Activated CD8-positive, alpha-beta T cell treated with anti-CD3 and anti-CD28 coated beads, Interleukin-2, amount 10 ng/mL, durations not matched to agents 7 days and 5 days (primary cell): ENCODE measurements at regions of chr22 and their contacts with region 1.

Region 1: DNA sequence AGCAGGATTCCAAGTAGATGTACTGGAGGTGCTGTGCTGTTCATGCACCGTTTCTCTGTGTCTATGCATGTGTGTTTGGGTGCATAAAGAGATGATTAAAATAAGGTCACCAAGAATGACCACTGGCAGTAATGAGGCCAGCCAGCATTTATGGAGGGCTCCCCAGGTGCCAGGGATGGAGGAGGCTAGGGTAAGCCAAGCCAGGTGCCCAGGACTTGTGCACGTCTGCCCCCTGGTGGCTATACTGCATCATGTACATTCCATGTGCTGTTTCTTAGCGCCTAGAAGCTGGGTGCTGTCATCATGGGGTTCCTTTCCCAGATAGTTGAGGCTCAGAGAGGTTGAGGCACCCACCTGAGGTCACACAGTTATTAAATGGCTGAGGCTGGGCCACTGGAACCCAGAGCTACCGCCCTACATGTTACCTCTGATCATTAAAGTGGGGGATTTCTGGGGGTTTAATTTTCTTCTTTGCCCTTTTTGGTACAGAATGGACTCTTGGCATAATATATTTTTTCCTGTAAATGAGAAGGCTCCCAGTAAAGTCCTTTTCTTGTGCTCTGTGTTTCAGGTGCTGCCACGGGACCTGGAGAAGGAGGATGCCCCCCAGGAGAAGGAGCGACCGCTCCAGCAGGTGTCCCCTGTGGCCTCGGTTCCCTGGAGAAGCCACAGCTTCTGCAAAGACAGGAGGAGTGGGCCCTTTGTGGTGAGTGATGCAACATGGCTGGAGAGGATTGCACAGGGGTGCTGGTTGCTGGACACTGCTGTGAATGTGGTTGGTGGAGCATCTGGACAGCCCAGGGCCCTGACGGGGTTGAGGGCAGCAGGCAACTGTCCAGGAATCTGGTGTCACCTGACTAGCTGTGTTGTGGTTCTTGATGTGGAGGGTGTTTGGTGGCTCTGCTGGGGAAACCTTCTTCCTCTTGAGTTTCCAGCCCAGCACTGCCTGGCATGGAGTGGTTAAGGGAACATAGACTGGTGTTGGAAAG is 96.4 kb downstream of the KIAA1671 start:
- DNase-seq: peak; percentile 83
- ATAC-seq: peak; percentile 98
- H3K4me3 Mint-ChIP-seq: no peak overlapping the region
- H3K27ac Mint-ChIP-seq: no peak overlapping the region
- H3K4me1 Mint-ChIP-seq: no peaks in the 10 kb centered on the region
- H3K27me3 Mint-ChIP-seq: no peaks in the 10 kb centered on the region

Region 2: GRCh38 chr22:24768537-24769374 is 280.2 kb before region 1 on chr22:
- CTCF ChIA-PET with region 1: interaction called, 11 read pairs
- POLR2A ChIA-PET with region 1: no interaction called
- DNase-seq: peak; percentile 57
- ATAC-seq: peak; percentile 64
- H3K4me3 Mint-ChIP-seq: no peak overlapping the region
- H3K27ac Mint-ChIP-seq: no peak overlapping the region
- H3K4me1 Mint-ChIP-seq: peaks cover 6% of the 10 kb centered on the region
- H3K27me3 Mint-ChIP-seq: peaks cover 5% of the 10 kb centered on the region

Region 3: GRCh38 chr22:24951942-24952836 is 96.8 kb before region 1 on chr22 and contains the start of gene KIAA1671:
- CTCF ChIA-PET with region 1: interaction called, 111 read pairs
- POLR2A ChIA-PET with region 1: interaction called, 4 read pairs
- DNase-seq: peak; percentile 85
- ATAC-seq: peak; percentile 94
- H3K4me3 Mint-ChIP-seq: peak within 1 kb of the TSS; percentile 78
- H3K27ac Mint-ChIP-seq: no peak within 1 kb of the TSS
- H3K4me1 Mint-ChIP-seq: peaks cover 21% of the 10 kb centered on the region
- H3K27me3 Mint-ChIP-seq: peaks cover 57% of the 10 kb centered on the region
- total RNA-seq, gene KIAA1671: 5.1 to 5.5 TPM

Region 4: GRCh38 chr22:25035715-25036114 is 13.2 kb before region 1 on chr22:
- CTCF ChIA-PET with region 1: interaction called, 15 read pairs
- POLR2A ChIA-PET with region 1: no interaction called
- DNase-seq: no peak
- ATAC-seq: no peak
- H3K4me3 Mint-ChIP-seq: no peak overlapping the region
- H3K27ac Mint-ChIP-seq: no peak overlapping the region
- H3K4me1 Mint-ChIP-seq: no peaks in the 10 kb centered on the region
- H3K27me3 Mint-ChIP-seq: peaks cover 3% of the 10 kb centered on the region

Region 5: GRCh38 chr22:25076336-25076735 is 27.4 kb after region 1 on chr22:
- CTCF ChIA-PET with region 1: interaction called, 18 read pairs
- POLR2A ChIA-PET with region 1: no interaction called
- DNase-seq: peak; percentile 45
- ATAC-seq: peak; percentile 67
- H3K4me3 Mint-ChIP-seq: peak overlapping the region; percentile 60
- H3K27ac Mint-ChIP-seq: peak overlapping the region; percentile 82
- H3K4me1 Mint-ChIP-seq: peaks cover 63% of the 10 kb centered on the region
- H3K27me3 Mint-ChIP-seq: no peaks in the 10 kb centered on the region

Region 6: GRCh38 chr22:25167082-25167481 is 118.1 kb after region 1 on chr22:
- CTCF ChIA-PET with region 1: no interaction called
- POLR2A ChIA-PET with region 1: no interaction called
- DNase-seq: no peak
- ATAC-seq: no peak
- H3K4me3 Mint-ChIP-seq: no peak overlapping the region
- H3K27ac Mint-ChIP-seq: no peak overlapping the region
- H3K4me1 Mint-ChIP-seq: peaks cover 4% of the 10 kb centered on the region
- H3K27me3 Mint-ChIP-seq: no peaks in the 10 kb centered on the region